Breast epithelium (tissue), 4 donors: ENCODE measurements at regions of chr7 and their contacts with region 1.

Region 1: GRCh38 chr7:153217032-153217431 is 457.5 kb downstream of the ACTR3B start:
- DNase-seq: no peak
- H3K4me3 ChIP-seq: no peak overlapping the region
- H3K27ac ChIP-seq: no peak overlapping the region
- H3K4me1 ChIP-seq: no peaks in the 10 kb centered on the region
- H3K27me3 ChIP-seq: no peaks in the 10 kb centered on the region
- CTCF ChIP-seq: no peak
- POLR2A ChIP-seq: no peak

Region 2: GRCh38 chr7:153258686-153259085 is 41.7 kb after region 1 on chr7:
- intact Hi-C with region 1: loop called (anchors 1 kb)
- DNase-seq: no peak
- H3K4me3 ChIP-seq: no peak overlapping the region
- H3K27ac ChIP-seq: no peak overlapping the region
- H3K4me1 ChIP-seq: no peaks in the 10 kb centered on the region
- H3K27me3 ChIP-seq: no peaks in the 10 kb centered on the region
- CTCF ChIP-seq: no peak
- POLR2A ChIP-seq: no peak